ENCODE measurements at regions of chr1 and their contacts with region 1.

Region 1: GRCh38 chr1:99717005-99717404 is 49.4 kb downstream of the FRRS1 start:
- DNase-seq: no peak
- ATAC-seq: no peak
- H3K4me3 ChIP-seq: no peak overlapping the region
- H3K27ac ChIP-seq: no peak overlapping the region
- H3K4me1 ChIP-seq: no peaks in the 10 kb centered on the region
- H3K27me3 ChIP-seq: no peaks in the 10 kb centered on the region

Region 2: DNA sequence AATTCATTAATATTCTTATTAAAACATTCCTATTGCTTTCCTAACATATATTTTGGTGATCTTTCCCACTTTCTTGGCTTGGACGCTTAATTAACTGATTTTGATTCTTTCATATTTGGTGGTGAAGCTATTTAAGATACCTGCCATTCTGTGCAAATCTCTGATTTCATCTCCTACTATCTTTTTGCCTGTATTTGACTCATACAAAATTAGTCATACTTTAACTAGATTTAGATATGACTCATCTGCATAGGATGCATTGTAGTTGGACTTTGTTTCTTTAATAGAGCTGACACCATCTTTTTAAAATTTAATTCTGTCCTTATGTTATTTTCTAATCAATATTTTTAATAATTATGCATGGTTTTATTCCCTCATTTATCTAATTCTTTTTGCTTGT is 546.5 kb before region 1 on chr1:
- intact Hi-C with region 1: loop called in 1 of 4 experiments (anchors 10 kb)
- DNase-seq: no peak
- ATAC-seq: no peak
- H3K4me3 ChIP-seq: no peak overlapping the region
- H3K27ac ChIP-seq: no peak overlapping the region
- H3K4me1 ChIP-seq: no peaks in the 10 kb centered on the region
- H3K27me3 ChIP-seq: no peaks in the 10 kb centered on the region

Region 3: DNA sequence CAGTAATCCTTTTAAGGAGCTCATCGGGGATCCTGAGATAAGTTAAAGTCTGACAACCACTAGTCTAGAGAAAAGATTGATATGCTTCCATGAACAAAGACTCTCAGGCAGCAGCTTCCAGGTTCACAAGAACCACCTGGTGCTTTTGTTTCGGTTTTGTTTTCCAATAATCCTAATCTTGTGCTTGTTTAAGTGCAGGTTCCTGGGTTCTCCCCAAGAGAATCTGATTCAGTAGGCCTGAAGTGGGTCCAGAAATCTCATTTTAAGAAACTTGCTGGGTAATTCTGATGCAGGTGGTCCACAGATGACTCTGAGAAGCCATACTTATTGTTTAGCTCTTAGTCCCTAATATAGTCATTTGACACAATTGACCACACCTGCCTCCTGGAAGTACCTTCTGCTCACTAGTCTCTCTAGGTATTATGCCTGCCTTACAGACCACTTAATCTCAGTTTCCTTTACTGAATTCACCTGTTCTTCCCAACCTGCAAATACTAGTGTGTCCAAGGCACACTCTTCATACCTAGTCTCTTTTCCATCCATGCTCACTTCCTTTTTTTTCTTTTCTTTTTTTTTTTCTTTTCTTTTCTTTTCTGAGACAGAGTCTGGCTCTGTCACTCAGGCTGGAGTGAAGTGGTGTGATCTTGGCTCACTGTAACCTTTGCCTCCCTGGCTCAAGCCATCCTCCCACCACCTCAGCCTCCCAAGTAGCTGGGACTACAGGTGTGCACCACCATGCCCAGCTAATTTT is 69.9 kb after region 1 on chr1:
- intact Hi-C with region 1: no loop called
- DNase-seq: no peak
- ATAC-seq: no peak
- H3K4me3 ChIP-seq: no peak overlapping the region
- H3K27ac ChIP-seq: no peak overlapping the region
- H3K4me1 ChIP-seq: no peaks in the 10 kb centered on the region
- H3K27me3 ChIP-seq: no peaks in the 10 kb centered on the region

Measured in right cardiac atrium (tissue), 5 donors.